Activated B cell treated with CpG ODN at 0.5 μM for 24 hours (primary cell): ENCODE measurements at regions of chr19 and their contacts with region 1.

Region 1: GRCh38 chr19:49391581-49392399 is 3.7 kb downstream of the KASH5 start:
- DNase-seq: peak; percentile 67
- ATAC-seq: peak; percentile 51
- H3K4me3 Mint-ChIP-seq: peak overlapping the region; percentile 42
- H3K27ac Mint-ChIP-seq: peak overlapping the region; percentile 84
- H3K4me1 Mint-ChIP-seq: peaks cover 46% of the 10 kb centered on the region
- H3K27me3 Mint-ChIP-seq: no peaks in the 10 kb centered on the region
- CTCF ChIP-seq: peak; percentile 25

Region 2: DNA sequence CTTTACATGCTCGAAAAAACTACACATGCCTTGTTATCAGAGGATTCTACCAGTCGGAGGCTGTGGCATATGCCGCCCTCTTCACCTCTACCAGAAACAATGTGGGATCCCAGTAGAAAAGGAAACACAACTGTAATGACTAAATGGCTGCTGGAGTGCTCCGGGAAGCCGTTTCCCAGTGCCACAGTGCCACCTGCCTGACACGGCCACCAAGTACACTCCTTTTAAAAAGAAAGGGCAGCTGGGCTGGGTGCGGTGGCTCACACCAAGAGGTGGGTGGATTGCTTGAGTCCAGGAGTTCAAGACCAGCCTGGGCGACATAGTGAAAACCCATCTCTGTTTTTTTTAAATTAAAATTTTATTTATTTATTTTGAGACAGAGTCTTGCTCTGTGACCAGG is 166.9 kb before region 1 on chr19:
- CTCF ChIA-PET with region 1: interaction called, 6 read pairs
- POLR2A ChIA-PET with region 1: no interaction called
- intact Hi-C with region 1: loop called (anchors 1 kb)
- DNase-seq: no peak
- ATAC-seq: peak; percentile 54
- H3K4me3 Mint-ChIP-seq: no peak overlapping the region
- H3K27ac Mint-ChIP-seq: no peak overlapping the region
- H3K4me1 Mint-ChIP-seq: peaks cover 6% of the 10 kb centered on the region
- H3K27me3 Mint-ChIP-seq: peaks cover 6% of the 10 kb centered on the region
- CTCF ChIP-seq: no peak

Region 3: DNA sequence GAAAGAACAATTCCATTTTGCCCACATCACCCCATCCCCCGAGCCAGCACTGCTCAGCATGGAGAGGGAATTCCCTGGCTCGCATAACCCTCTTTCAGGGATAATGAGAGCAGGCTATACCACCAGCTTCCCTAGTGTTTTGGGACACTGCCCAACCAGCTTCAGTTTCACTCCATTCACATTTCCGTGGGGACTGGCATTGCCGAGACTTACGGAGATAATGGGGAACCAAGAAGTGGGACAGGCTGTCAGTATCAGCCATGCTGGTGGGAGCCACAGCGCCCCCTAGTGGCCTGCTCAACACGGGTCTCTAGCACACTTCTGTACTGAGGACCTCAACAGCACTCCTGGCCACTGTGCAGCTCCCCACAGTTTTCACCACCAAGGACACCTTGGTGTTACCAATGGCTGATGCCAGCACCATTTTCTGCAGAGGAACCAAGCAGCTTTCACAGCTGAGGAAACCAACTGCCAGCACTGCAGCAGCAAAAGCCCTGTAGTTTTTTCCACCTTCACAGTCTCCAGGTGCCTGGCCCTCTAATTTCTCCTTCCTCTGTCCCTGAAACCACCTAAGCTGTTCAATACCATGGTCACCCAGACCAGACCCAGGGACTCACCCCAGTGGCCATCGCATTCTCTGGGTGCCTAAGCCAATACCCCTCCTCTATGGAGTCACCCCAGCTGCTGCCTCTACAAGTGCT is 90.5 kb before region 1 on chr19:
- CTCF ChIA-PET with region 1: interaction called, 10 read pairs
- POLR2A ChIA-PET with region 1: interaction called, 9 read pairs
- intact Hi-C with region 1: loop called (anchors 1 kb)
- DNase-seq: peak; percentile 81
- ATAC-seq: peak; percentile 99
- H3K4me3 Mint-ChIP-seq: peak overlapping the region; percentile 64
- H3K27ac Mint-ChIP-seq: peak overlapping the region; percentile 7
- H3K4me1 Mint-ChIP-seq: peaks cover 21% of the 10 kb centered on the region
- H3K27me3 Mint-ChIP-seq: no peaks in the 10 kb centered on the region
- CTCF ChIP-seq: no peak

Region 4: GRCh38 chr19:49331616-49332055 is 60.2 kb before region 1 on chr19:
- CTCF ChIA-PET with region 1: interaction called, 6 read pairs
- POLR2A ChIA-PET with region 1: interaction called, 86 read pairs
- intact Hi-C with region 1: no loop called
- DNase-seq: no peak
- ATAC-seq: peak; percentile 44
- H3K4me3 Mint-ChIP-seq: peak overlapping the region; percentile 73
- H3K27ac Mint-ChIP-seq: peak overlapping the region; percentile 100
- H3K4me1 Mint-ChIP-seq: peaks cover 95% of the 10 kb centered on the region
- H3K27me3 Mint-ChIP-seq: no peaks in the 10 kb centered on the region
- CTCF ChIP-seq: no peak

Region 5: DNA sequence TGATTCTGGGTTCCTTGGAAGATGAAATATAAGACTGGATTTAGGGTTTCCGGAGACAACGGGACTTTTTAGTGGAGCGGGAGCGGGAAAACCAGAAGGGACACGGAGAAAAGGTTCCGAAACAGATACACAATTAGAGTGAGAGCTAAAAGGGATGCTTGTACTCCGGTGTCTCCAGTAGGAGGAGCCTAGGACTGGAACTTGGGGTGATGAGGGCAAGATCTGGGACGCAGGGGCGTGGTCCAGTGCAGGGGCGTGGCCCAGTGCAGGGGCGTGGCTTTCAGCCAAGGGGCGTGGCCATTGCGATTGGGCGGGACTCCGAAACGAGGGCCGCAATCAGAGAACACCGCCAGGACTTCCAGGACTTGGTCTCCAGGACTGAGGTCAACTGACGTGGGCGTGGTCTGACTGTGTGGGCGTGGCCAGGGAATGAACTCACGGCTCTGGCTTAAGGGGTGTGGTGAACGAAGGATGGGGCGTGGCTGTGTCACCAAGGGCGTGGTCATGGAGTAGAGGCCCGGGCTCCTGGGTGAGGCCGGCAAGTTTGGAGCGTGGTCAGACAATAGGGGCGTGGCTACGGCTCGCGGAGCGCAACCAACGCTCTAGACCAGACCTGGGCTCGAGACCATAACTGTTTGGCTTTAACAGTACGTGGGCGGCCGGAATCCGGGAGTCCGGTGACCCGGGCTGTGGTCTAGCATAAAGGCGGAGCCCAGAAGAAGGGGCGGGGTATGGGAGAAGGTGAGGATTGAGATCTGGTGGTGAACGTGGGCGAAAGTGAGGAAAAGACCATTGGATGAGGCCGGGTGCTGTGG is 28.3 kb before region 1 on chr19 and contains the start of gene DKKL1:
- CTCF ChIA-PET with region 1: no interaction called
- POLR2A ChIA-PET with region 1: interaction called, 11 read pairs
- intact Hi-C with region 1: loop called (anchors 1 kb)
- DNase-seq: peak; percentile 94
- ATAC-seq: peak; percentile 85
- H3K4me3 Mint-ChIP-seq: peak within 1 kb of the TSS; percentile 29
- H3K27ac Mint-ChIP-seq: no peak within 1 kb of the TSS
- H3K4me1 Mint-ChIP-seq: peaks cover 31% of the 10 kb centered on the region
- H3K27me3 Mint-ChIP-seq: no peaks in the 10 kb centered on the region
- CTCF ChIP-seq: no peak
- total RNA-seq, gene DKKL1: 0.71 and 0.76 TPM in 2 replicates

Region 6: GRCh38 chr19:49409441-49410029 is 17.7 kb after region 1 on chr19:
- CTCF ChIA-PET with region 1: interaction called, 11 read pairs
- POLR2A ChIA-PET with region 1: interaction called, 8 read pairs
- intact Hi-C with region 1: no loop called
- DNase-seq: no peak
- ATAC-seq: peak; percentile 83
- H3K4me3 Mint-ChIP-seq: peak overlapping the region; percentile 67
- H3K27ac Mint-ChIP-seq: peak overlapping the region; percentile 89
- H3K4me1 Mint-ChIP-seq: peaks cover 56% of the 10 kb centered on the region
- H3K27me3 Mint-ChIP-seq: no peaks in the 10 kb centered on the region
- CTCF ChIP-seq: no peak

Region 7: DNA sequence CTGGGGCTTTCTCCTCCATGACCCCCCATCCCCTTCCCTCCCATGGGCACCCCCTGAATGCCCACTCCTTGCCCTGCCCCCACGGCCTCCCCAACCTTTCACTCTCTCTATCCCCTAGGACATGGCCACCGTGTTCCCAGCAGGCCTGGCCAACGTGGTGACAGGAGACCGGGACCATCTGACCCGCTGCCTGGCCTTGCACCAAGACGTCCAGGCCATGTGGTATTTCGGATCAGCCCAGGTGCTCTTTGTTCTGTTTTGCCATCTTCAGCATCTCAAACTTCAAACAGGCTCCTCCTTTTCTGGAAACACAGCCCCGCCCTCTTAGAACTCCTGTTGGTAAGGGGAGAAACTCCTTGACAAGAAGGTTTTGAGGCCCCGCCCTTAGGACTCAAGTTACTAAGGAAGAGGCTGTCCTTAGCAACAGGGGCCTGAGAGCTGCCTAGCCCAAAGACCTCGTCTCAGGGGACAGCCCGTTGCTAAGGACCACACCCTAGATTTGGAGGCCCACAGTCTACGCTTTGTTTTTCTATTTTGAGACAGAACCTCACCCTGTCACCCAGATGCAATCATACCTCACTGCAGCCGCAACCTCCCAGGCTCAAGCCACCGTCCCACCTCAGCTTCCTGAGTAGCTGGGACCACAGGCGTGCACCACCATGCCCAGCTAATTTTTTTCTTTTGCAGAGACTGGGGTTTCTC is 77.1 kb after region 1 on chr19:
- CTCF ChIA-PET with region 1: interaction called, 22 read pairs
- POLR2A ChIA-PET with region 1: interaction called, 12 read pairs
- intact Hi-C with region 1: loop called (anchors 1 kb)
- DNase-seq: peak; percentile 72
- ATAC-seq: peak; percentile 76
- H3K4me3 Mint-ChIP-seq: peak overlapping the region; percentile 61
- H3K27ac Mint-ChIP-seq: peak overlapping the region; percentile 97
- H3K4me1 Mint-ChIP-seq: peaks cover 46% of the 10 kb centered on the region
- H3K27me3 Mint-ChIP-seq: no peaks in the 10 kb centered on the region
- CTCF ChIP-seq: no peak